Panc1 (cell line): ENCODE measurements at regions of chr2 and their contacts with region 1.

Region 1: GRCh38 chr2:42304059-42304713 is 56.8 kb downstream of the COX7A2L start:
- DNase-seq: no peak
- ATAC-seq: no peak
- H3K4me3 ChIP-seq: no peak overlapping the region
- H3K27ac ChIP-seq: no peak overlapping the region
- H3K4me1 ChIP-seq: no peaks in the 10 kb centered on the region
- H3K27me3 ChIP-seq: no peaks in the 10 kb centered on the region
- CTCF ChIP-seq: no peak

Region 2: DNA sequence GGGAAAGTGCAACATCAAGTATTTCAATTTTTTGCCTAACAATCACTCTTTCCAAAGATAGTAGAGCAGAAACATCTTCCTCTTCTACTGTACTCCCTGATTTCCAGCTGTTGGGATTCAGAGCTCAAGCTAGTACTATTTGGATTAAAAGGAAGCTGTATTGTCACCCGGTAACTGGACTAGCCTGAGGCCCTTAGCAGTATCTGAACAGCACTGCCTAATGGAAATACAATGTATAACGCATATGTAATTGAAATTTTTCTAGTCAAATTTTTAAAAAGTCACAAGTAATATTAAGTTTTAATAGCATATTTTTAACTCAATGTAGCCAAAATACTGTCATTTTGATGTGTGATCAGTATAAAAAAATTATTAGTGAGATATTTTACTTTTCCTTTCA is 29.3 kb before region 1 on chr2:
- CTCF ChIA-PET with region 1: no interaction called
- POLR2A ChIA-PET with region 1: interaction called, 12 read pairs
- in situ Hi-C with region 1: no loop called
- intact Hi-C with region 1: no loop called
- DNase-seq: no peak
- ATAC-seq: peak; percentile 66; the same call in 1 of the 2 replicates
- H3K4me3 ChIP-seq: no peak overlapping the region
- H3K27ac ChIP-seq: no peak overlapping the region
- H3K4me1 ChIP-seq: no peaks in the 10 kb centered on the region
- H3K27me3 ChIP-seq: no peaks in the 10 kb centered on the region
- CTCF ChIP-seq: peak; percentile 14; the same call in 1 of the 2 replicates